Mammary epithelial cell (primary cell): ENCODE measurements at regions of chr6 and their contacts with region 1.

Region 1: DNA sequence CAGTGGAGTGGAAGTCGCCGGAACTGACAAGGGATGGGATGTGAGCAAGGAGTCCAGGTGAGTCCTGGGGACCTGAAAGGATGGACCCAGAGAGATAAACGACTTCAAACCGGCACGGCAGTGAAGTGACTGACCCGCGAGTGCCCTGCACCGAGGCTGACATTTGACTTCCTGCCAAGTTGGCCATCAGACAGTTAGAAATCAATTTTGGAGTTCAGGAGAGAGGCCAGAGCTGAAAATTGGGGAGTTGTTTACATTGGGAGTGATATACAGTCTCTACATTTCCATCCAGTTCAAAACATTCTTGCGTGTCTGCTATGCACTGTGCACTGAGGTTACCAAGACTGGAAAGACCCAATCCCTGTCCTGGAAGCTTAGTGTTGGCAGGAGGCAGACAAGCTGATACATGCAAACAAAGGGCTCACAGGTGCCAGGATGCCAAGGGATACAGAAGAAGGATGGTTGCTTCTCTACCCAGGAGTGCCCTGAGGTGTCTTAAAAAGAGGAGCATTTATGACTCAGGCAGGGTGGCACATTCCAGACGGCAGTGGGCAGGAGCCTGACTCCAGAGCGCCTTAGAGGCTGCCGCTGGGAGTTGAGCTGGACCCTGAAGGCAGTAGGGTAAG is 186.6 kb downstream of the MTHFD1L start:
- DNase-seq: peak; percentile 94
- H3K4me3 ChIP-seq: no peak overlapping the region
- H3K27ac ChIP-seq: peak overlapping the region; percentile 70
- H3K4me1 ChIP-seq: peaks cover 21% of the 10 kb centered on the region
- H3K27me3 ChIP-seq: no peaks in the 10 kb centered on the region
- CTCF ChIP-seq: peak; percentile 29 to 63

Region 2: DNA sequence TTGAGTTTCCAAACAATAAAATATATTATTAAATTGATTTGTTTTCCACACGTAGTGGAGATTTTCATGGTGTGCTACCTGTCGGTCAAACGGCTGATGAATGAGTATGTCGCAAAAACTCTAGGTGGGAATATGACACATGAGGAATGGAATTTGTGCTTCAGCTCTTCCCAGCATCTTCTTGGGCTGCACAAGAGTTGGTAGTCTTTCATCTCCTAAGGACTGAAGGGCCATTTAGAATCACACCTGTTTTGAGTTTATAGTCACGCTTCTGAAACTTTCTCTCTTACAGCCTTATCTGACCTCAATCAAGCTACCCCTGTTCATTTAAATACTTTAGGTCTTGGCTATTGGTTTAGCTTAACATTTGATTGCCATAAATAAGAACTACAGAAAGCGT is 29.9 kb after region 1 on chr6:
- CTCF ChIA-PET with region 1: interaction called, 20 read pairs
- dilution Hi-C with region 1: no loop called
- in situ Hi-C with region 1: no loop called
- intact Hi-C with region 1: loop called (anchors 1 kb)
- DNase-seq: peak; percentile 64
- H3K4me3 ChIP-seq: no peak overlapping the region
- H3K27ac ChIP-seq: peak overlapping the region; percentile 62
- H3K4me1 ChIP-seq: peaks cover 20% of the 10 kb centered on the region
- H3K27me3 ChIP-seq: no peaks in the 10 kb centered on the region
- CTCF ChIP-seq: no peak

Region 3: GRCh38 chr6:151096255-151096612 is 44.1 kb after region 1 on chr6:
- CTCF ChIA-PET with region 1: no interaction called
- dilution Hi-C with region 1: no loop called
- in situ Hi-C with region 1: no loop called
- intact Hi-C with region 1: no loop called
- DNase-seq: no peak
- H3K4me3 ChIP-seq: no peak overlapping the region
- H3K27ac ChIP-seq: no peak overlapping the region
- H3K4me1 ChIP-seq: no peaks in the 10 kb centered on the region
- H3K27me3 ChIP-seq: no peaks in the 10 kb centered on the region
- CTCF ChIP-seq: no peak

Region 4: GRCh38 chr6:151639748-151640147 is 587.6 kb after region 1 on chr6:
- CTCF ChIA-PET with region 1: no interaction called
- dilution Hi-C with region 1: no loop called
- in situ Hi-C with region 1: no loop called
- intact Hi-C with region 1: no loop called
- DNase-seq: no peak
- H3K4me3 ChIP-seq: no peak overlapping the region
- H3K27ac ChIP-seq: no peak overlapping the region
- H3K4me1 ChIP-seq: no peaks in the 10 kb centered on the region
- H3K27me3 ChIP-seq: no peaks in the 10 kb centered on the region
- CTCF ChIP-seq: no peak